Naive thymus-derived CD4-positive, alpha-beta T cell (primary cell): ENCODE measurements at regions of chr1 and their contacts with region 1.

Region 1: DNA sequence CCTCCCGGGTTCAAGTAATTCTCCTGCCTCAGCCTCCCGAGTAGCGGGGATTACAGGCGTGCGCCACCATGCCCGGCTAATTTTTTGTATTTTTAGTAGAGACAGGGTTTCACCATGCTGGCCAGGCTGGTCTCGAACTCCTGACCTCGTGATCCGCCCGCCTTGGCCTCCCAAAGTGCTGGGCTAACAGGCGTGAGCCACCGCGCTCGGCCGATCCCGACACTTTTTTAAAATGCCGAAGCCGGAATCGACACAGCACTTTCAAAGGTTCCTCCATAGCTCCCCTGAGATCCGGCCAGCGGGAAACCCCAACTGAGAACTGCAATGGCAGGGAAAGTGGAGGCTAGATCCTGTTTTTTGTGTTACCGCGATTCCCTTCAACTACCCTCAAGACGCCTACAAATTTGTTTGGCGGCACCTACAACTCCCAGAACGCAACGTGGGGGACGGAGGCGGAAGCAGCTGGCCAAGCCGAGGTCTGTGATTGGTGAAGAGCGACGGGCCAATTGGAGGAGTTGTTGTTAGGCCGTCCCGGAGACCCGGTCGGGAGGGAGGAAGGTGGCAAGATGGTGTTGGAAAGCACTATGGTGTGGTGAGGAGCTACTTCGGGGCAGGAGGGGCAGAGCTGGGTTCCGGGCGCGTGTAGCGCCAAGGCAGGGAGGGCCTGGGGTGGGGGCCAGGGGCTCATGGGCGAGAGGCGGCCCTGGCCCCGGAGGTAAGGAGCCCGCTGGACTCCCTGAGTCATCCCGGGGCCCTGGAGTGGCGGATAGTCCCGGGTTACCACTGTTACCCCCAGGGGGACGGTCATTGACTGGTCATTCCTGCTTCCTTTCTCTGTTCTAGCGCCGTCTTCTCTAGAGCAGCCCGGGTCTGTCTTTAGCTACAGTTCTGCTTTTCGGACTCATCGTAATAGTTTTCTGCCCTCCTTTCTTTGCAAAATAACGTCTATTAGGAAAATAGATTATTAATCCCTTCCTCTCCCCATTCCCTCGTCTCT is at the start of gene PSMD4:
- DNase-seq: peak; percentile 82 to 96 (median 93)
- ATAC-seq: peak; percentile 98
- H3K4me3 ChIP-seq: peak within 1 kb of the TSS; percentile 73
- H3K4me3 Mint-ChIP-seq: peak within 1 kb of the TSS; percentile 89 to 99 (median 96)
- H3K27ac ChIP-seq: peak within 1 kb of the TSS; percentile 79
- H3K27ac Mint-ChIP-seq: peak within 1 kb of the TSS; percentile 91 to 100 (median 95)
- H3K4me1 ChIP-seq: peaks cover 4 to 6% of the 10 kb centered on the region in 2 donors
- H3K4me1 Mint-ChIP-seq: peaks cover 23 to 47% (median 36%) of the 10 kb centered on the region in 7 donors
- H3K27me3 ChIP-seq: no peaks in the 10 kb centered on the region
- H3K27me3 Mint-ChIP-seq: peaks cover 0 to 3% (median 0%) of the 10 kb centered on the region in 5 donors
- total RNA-seq, gene PSMD4: 72.0 to 193 (median 126) TPM

Region 2: DNA sequence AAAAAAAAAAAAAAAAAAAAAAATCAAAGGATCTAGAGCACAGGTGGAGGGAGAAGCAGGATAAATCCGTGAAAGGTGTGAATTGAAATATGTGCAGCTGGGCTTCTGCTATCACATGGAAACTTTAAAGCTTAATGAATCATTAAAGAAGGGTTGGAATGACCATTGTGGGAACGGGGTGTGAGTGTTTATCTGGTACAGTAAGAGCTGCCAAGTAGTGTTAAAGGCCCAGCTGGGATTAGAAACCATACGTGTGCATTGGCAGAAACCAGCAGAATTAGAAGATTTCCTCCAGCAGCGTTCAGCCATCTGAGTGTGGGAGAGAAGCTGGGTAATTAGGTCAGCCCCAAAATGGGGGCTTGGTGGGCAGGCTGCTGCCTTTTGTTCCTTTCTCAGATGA is 725.5 kb before region 1 on chr1:
- CTCF ChIA-PET with region 1: no interaction called
- POLR2A ChIA-PET with region 1: no interaction called
- intact Hi-C with region 1: no loop called
- DNase-seq: no peak
- ATAC-seq: no peak
- H3K4me3 ChIP-seq: no peak overlapping the region
- H3K4me3 Mint-ChIP-seq: no peak overlapping the region
- H3K27ac ChIP-seq: no peak overlapping the region
- H3K27ac Mint-ChIP-seq: no peak overlapping the region
- H3K4me1 ChIP-seq: no peaks in the 10 kb centered on the region
- H3K4me1 Mint-ChIP-seq: peaks cover 0 to 6% (median 4%) of the 10 kb centered on the region in 7 donors
- H3K27me3 ChIP-seq: no peaks in the 10 kb centered on the region
- H3K27me3 Mint-ChIP-seq: no peaks in the 10 kb centered on the region

Region 3: GRCh38 chr1:150925816-150926741 is 328.4 kb before region 1 on chr1 and contains the start of gene SETDB1:
- CTCF ChIA-PET with region 1: no interaction called
- POLR2A ChIA-PET with region 1: no interaction called
- intact Hi-C with region 1: loop called in 1 of 2 experiments (anchors 1 kb)
- DNase-seq: peak; percentile 69 to 93 (median 90)
- ATAC-seq: peak; percentile 98
- H3K4me3 ChIP-seq: peak within 1 kb of the TSS; percentile 92
- H3K4me3 Mint-ChIP-seq: peak within 1 kb of the TSS; percentile 92 to 97 (median 94)
- H3K27ac ChIP-seq: peak within 1 kb of the TSS; percentile 91
- H3K27ac Mint-ChIP-seq: peak within 1 kb of the TSS; percentile 92 to 99 (median 95)
- H3K4me1 ChIP-seq: peaks cover 0 to 7% of the 10 kb centered on the region in 2 donors
- H3K4me1 Mint-ChIP-seq: peaks cover 15 to 35% (median 27%) of the 10 kb centered on the region in 7 donors
- H3K27me3 ChIP-seq: no peaks in the 10 kb centered on the region
- H3K27me3 Mint-ChIP-seq: no peaks in the 10 kb centered on the region
- total RNA-seq, gene SETDB1: 57.3 to 94.9 (median 61.7) TPM

Region 4: DNA sequence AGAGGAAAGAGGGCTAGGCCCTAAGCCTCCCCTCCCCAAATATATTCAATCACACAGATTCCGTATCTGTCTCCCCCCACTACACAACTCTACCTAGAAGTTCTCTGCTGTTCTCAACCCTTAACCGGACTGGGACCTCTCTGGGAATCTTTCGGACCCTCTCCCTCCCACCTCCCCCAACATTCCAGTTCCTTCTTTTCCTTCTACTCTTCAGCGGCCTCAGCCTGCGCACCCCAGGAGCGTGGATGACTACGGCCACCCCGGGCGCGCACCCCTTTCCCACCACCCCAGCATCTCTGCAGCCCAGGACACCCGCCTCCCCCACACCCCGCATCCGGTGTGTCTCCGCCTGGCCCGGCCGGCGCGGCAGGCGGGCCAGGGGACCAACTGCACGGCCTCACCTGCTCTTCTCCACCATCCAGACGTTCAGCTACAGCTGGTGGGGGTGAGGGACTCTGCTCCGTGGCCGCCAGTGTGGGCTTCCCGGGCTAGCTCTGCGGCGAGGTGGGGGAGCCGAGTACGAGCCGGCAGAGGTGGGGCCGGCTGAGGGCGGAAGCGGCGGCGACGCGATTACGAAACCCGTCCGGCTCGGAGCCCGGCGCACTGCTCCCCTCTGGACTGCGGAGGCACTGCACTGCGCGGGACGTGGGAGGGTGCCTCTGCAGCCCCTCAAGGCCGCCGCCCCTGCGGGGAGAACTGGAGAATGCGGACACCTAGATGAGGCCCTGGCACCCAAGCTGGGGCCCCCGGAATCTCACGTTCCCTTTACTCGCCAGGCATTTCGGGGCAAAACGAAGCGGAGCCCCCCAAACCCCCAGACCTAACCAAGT is 195.2 kb before region 1 on chr1 and contains the start of gene CDC42SE1:
- CTCF ChIA-PET with region 1: interaction called, 3 read pairs
- POLR2A ChIA-PET with region 1: no interaction called
- intact Hi-C with region 1: loop called in 1 of 2 experiments (anchors 10 kb)
- DNase-seq: peak; percentile 76 to 85 (median 82)
- ATAC-seq: peak; percentile 84
- H3K4me3 ChIP-seq: peak within 1 kb of the TSS; percentile 82
- H3K4me3 Mint-ChIP-seq: peak within 1 kb of the TSS; percentile 95 to 100 (median 99)
- H3K27ac ChIP-seq: peak within 1 kb of the TSS; percentile 99
- H3K27ac Mint-ChIP-seq: peak within 1 kb of the TSS; percentile 93 to 99 (median 95)
- H3K4me1 ChIP-seq: peaks cover 11 to 26% of the 10 kb centered on the region in 2 donors
- H3K4me1 Mint-ChIP-seq: peaks cover 35 to 55% (median 41%) of the 10 kb centered on the region in 7 donors
- H3K27me3 ChIP-seq: no peaks in the 10 kb centered on the region
- H3K27me3 Mint-ChIP-seq: no peaks in the 10 kb centered on the region
- total RNA-seq, gene CDC42SE1: 362 to 516 (median 425) TPM

Region 5: GRCh38 chr1:151165738-151166505 is 88.6 kb before region 1 on chr1 and contains the starts of genes LYSMD1 and SCNM1:
- CTCF ChIA-PET with region 1: interaction called, 3 read pairs
- POLR2A ChIA-PET with region 1: no interaction called
- intact Hi-C with region 1: loop called (anchors 1 kb)
- DNase-seq: peak; percentile 78 to 98 (median 97)
- ATAC-seq: peak; percentile 98
- H3K4me3 ChIP-seq: peak within 1 kb of the TSS; percentile 97
- H3K4me3 Mint-ChIP-seq: peak within 1 kb of the TSS; percentile 87 to 99 (median 95)
- H3K27ac ChIP-seq: peak within 1 kb of the TSS; percentile 71
- H3K27ac Mint-ChIP-seq: peak within 1 kb of the TSS; percentile 90 to 99 (median 97)
- H3K4me1 ChIP-seq: peaks cover 18 to 19% of the 10 kb centered on the region in 2 donors
- H3K4me1 Mint-ChIP-seq: peaks cover 30 to 70% (median 52%) of the 10 kb centered on the region in 7 donors
- H3K27me3 ChIP-seq: no peaks in the 10 kb centered on the region
- H3K27me3 Mint-ChIP-seq: peaks cover 0 to 3% (median 0%) of the 10 kb centered on the region in 5 donors
- total RNA-seq, gene LYSMD1: 1.4 to 3.3 (median 2.3) TPM
- total RNA-seq, gene SCNM1: 37.1 to 73.1 (median 57.1) TPM

Region 6: DNA sequence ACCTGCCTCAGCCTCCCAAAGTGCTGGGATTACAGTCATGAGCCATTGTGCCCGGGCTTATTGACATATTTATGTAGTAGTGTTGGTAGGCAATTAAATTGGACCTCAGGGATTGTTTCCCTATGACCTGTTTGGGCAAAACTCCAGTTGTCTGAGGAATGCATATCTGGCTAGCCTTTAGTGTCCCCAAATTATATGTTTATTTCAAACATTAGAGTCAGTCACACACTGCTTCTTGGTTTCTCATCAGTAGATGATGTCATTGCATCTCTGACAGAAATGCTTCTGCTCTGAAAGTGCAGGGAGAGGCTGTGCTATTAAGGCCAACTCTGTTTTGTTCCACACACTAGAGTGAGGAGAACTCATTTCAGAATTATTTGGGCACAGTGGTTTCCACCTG is 43.7 kb before region 1 on chr1:
- CTCF ChIA-PET with region 1: no interaction called
- POLR2A ChIA-PET with region 1: interaction called, 4 read pairs
- intact Hi-C with region 1: loop called in 1 of 2 experiments (anchors 5 kb)
- DNase-seq: no peak
- ATAC-seq: no peak
- H3K4me3 ChIP-seq: no peak overlapping the region
- H3K4me3 Mint-ChIP-seq: peak overlapping the region in 5 of 10 donors; percentile 11 to 66 (median 45)
- H3K27ac ChIP-seq: peak overlapping the region; percentile 13
- H3K27ac Mint-ChIP-seq: peak overlapping the region in 4 of 9 donors; percentile 4 to 91 (median 57)
- H3K4me1 ChIP-seq: peaks cover 5 to 13% of the 10 kb centered on the region in 2 donors
- H3K4me1 Mint-ChIP-seq: peaks cover 22 to 43% (median 36%) of the 10 kb centered on the region in 7 donors
- H3K27me3 ChIP-seq: no peaks in the 10 kb centered on the region
- H3K27me3 Mint-ChIP-seq: no peaks in the 10 kb centered on the region

Region 7: DNA sequence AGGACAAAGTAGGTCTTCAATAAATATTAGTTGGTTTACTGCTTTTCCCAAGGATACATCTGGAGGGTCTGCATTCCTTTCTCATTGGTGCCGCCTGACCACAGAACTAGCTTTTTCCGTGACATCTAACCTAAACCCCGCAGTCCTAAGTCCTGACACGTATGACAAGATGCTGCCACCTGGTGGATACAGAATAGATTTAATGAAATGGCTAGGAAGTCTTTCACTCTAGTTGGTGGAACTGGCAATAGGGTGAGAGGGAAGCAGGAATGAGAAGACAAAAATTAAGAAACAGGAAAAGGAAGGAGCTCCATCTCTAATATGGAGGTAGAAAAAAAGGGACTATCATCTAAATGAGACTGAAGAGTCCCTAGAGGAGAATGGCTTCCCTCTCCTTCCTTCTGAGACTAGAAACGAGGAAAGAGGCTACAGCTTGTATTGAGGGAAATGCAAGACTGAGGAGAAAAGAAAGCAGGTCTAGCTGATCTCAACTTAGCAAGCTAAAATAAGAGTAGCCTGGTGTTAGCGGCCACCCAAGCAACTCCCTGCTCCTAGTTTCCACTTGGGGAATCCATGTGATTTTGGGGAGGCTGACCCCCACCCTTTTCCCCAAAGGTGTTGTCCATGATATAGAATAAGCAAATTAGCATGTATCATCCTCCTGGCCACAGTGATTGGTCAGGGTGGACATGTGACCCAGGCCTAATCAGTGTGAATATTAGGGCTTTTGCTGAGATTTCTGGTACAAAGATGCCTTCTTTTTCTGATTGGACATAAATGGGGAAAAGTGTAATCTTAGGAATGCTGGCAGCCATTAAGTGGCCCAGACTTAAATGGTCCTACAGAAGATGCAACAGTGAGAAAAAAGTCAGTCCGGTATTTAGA is 86.6 kb after region 1 on chr1:
- CTCF ChIA-PET with region 1: interaction called, 4 read pairs
- POLR2A ChIA-PET with region 1: no interaction called
- intact Hi-C with region 1: loop called in 1 of 2 experiments (anchors 1 kb)
- DNase-seq: peak in 8 of 9 donors; percentile 46 to 75 (median 68)
- ATAC-seq: peak; percentile 92
- H3K4me3 ChIP-seq: no peak overlapping the region
- H3K4me3 Mint-ChIP-seq: peak overlapping the region in 1 of 10 donors; percentile 22
- H3K27ac ChIP-seq: peak overlapping the region; percentile 5
- H3K27ac Mint-ChIP-seq: peak overlapping the region; percentile 1 to 70 (median 52)
- H3K4me1 ChIP-seq: peaks cover 6 to 7% of the 10 kb centered on the region in 2 donors
- H3K4me1 Mint-ChIP-seq: peaks cover 20 to 39% (median 28%) of the 10 kb centered on the region in 7 donors
- H3K27me3 ChIP-seq: no peaks in the 10 kb centered on the region
- H3K27me3 Mint-ChIP-seq: no peaks in the 10 kb centered on the region